ENCODE measurements at regions of chr12 and their contacts with region 1.

Region 1: GRCh38 chr12:96208801-96209549 is 14.8 kb downstream of the ELK3 start:
- DNase-seq: no peak
- ATAC-seq: no peak
- H3K4me3 ChIP-seq: no peak overlapping the region
- H3K27ac ChIP-seq: no peak overlapping the region
- H3K4me1 ChIP-seq: peaks cover 13% of the 10 kb centered on the region
- H3K27me3 ChIP-seq: no peaks in the 10 kb centered on the region
- CTCF ChIP-seq: 0 out of 2 replicates have a peak, but pooled peaks have one; percentile 12
- POLR2A ChIP-seq: no peak
- RAD21 ChIP-seq: no peak

Region 2: DNA sequence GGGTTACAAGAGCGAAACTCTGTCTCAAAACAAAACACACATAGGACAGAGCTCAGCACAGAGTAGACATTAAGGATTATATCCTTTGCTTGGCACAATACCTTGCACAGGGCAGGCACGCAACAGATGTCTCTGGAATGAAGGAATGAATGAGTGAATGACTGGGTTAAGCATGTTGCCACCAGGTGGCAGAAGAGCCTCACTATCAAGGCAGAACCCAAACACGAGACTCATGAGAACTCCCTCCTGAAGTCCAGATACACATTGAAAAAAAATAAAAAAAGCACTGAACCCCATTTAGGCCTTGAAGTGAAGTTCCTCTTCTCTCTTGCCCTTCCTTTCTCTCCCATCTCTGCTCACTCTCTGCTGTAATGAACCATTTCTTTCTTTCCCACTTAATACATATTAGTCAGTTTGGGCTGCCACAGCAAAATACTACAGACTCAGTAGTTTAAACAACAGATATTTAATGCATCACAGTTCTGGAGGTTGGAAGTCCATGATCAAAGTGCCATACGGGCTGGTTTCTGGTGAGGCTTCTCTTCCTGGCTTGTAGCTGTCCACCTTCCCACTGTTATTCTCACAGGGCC is 147.0 kb before region 1 on chr12:
- CTCF ChIA-PET with region 1: interaction called, 3 read pairs
- POLR2A ChIA-PET with region 1: no interaction called
- dilution Hi-C with region 1: no loop called
- in situ Hi-C with region 1: loop called (anchors 5 kb)
- intact Hi-C with region 1: no loop called
- DNase-seq: peak; percentile 87
- ATAC-seq: peak; percentile 95
- H3K4me3 ChIP-seq: no peak overlapping the region
- H3K27ac ChIP-seq: no peak overlapping the region
- H3K4me1 ChIP-seq: no peaks in the 10 kb centered on the region
- H3K27me3 ChIP-seq: no peaks in the 10 kb centered on the region
- CTCF ChIP-seq: peak; percentile 93
- POLR2A ChIP-seq: no peak
- RAD21 ChIP-seq: peak; percentile 97

Region 3: DNA sequence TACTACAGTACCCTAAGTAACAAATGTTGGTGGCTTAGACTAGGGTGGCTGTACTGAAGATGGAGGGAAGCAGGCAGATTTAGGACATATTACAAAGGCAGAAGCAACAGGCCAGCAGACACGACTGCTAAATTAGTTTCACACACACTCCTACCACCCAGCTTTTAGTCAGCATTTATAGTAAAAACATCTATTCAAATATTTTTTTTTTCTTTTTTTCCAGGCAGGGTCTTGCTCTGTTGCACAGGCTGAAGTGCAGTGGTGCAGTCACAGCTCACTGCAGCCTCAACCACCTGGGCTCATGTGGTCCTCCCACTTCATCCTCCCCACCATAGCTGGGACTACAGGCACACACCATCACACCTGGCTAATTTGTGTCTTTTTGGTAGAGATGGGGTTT is 118.4 kb after region 1 on chr12:
- CTCF ChIA-PET with region 1: no interaction called
- POLR2A ChIA-PET with region 1: no interaction called
- dilution Hi-C with region 1: no loop called
- in situ Hi-C with region 1: no loop called
- intact Hi-C with region 1: no loop called
- DNase-seq: no peak
- ATAC-seq: no peak
- H3K4me3 ChIP-seq: no peak overlapping the region
- H3K27ac ChIP-seq: no peak overlapping the region
- H3K4me1 ChIP-seq: no peaks in the 10 kb centered on the region
- H3K27me3 ChIP-seq: no peaks in the 10 kb centered on the region
- CTCF ChIP-seq: no peak
- POLR2A ChIP-seq: no peak
- RAD21 ChIP-seq: no peak

Region 4: GRCh38 chr12:96501139-96501761 is 292.3 kb after region 1 on chr12:
- CTCF ChIA-PET with region 1: no interaction called
- POLR2A ChIA-PET with region 1: no interaction called
- dilution Hi-C with region 1: no loop called
- in situ Hi-C with region 1: no loop called
- intact Hi-C with region 1: no loop called
- DNase-seq: peak; percentile 61
- ATAC-seq: peak; percentile 82
- H3K4me3 ChIP-seq: no peak overlapping the region
- H3K27ac ChIP-seq: peak overlapping the region; percentile 84
- H3K4me1 ChIP-seq: peaks cover 8% of the 10 kb centered on the region
- H3K27me3 ChIP-seq: no peaks in the 10 kb centered on the region
- CTCF ChIP-seq: no peak
- POLR2A ChIP-seq: no peak
- RAD21 ChIP-seq: no peak

Measured in IMR-90 (cell line).